ENCODE measurements at regions of chr4 and their contacts with region 1.

Region 1: DNA sequence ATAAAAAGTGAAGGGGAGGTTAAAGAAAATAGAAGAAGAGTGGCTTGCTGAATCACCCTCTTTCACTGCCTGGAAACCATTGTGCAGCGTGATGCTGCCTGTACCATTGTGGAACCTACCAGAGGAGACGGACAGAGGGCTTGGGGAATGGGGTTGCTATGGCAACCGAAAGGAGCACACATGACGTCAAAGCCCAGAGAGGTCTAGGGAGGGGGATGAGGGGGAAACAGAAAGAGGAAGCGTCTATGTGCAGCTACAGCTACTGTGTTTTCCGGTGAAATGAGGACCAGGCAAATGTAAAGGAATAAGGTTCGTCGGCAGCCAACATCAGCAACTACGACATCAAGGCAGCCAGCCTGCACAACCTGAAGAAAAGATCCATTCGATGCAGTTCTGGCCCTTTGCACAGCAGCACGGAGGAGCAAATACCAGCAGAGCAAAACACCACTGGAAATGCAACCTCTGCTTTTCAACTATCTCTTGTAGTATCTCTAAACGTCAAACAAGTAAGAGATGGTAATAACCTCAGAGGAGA is at the start of gene MAPK10:
- DNase-seq: peak; percentile 65 to 96 (median 91)
- H3K4me3 ChIP-seq: peak within 1 kb of the TSS; percentile 46 to 93 (median 69)
- H3K27ac ChIP-seq: peak within 1 kb of the TSS; percentile 53 to 98 (median 91)
- H3K27me3 ChIP-seq: no peaks in the 10 kb centered on the region
- CTCF ChIP-seq: peak in 2 of 56 donors; percentile 1
- total RNA-seq, gene MAPK10: 218 to 700 (median 498) TPM

Region 2: GRCh38 chr4:86302251-86302650 is 57.8 kb before region 1 on chr4:
- intact Hi-C with region 1: loop called in 1 of 2 experiments (anchors 5 kb)
- DNase-seq: peak in 9 of 10 donors; percentile 46 to 84 (median 62)
- H3K4me3 ChIP-seq: peak overlapping the region in 14 of 59 donors; percentile 1 to 39 (median 6)
- H3K27ac ChIP-seq: peak overlapping the region in 42 of 59 donors; percentile 3 to 81 (median 40)
- H3K27me3 ChIP-seq: no peaks in the 10 kb centered on the region
- CTCF ChIP-seq: no peak

Measured in dorsolateral prefrontal cortex (tissue), 120 donors.